ENCODE measurements at regions of chr3 and their contacts with region 1.

Region 1: DNA sequence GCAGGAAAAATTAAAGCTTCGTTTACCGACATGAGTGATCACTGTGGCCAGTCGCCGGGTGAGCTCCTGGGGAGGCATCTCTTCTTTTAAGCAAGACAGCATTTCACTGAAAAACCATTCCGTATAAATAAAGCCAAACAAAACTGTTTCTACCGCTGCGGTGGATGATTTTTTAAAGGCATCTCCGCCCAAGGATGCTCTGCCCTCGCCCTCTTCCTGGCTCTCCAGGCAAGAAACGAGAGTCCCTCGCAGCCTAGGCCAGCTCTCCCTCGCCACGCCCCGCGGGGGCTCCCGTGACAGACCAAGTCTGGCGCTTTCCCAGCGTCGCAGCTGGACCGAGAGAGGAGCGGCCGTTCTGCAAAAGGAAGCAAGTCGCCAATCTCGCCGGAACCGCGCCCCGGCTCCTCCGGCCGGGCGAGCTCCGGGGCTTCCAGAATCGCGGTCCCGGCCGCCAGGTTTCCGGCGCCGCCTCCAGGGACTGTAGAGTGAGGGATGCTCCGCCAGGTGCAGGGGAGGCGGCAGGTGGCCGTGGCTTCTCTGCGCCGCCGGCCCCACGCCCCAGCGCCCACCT is 458 bp downstream of the MCF2L2 start:
- DNase-seq: peak; percentile 57
- ATAC-seq: peak; percentile 21
- H3K4me3 Mint-ChIP-seq: peak overlapping the region; percentile 79
- H3K27ac Mint-ChIP-seq: no peak overlapping the region
- H3K4me1 Mint-ChIP-seq: peaks cover 43% of the 10 kb centered on the region
- H3K27me3 Mint-ChIP-seq: peaks cover 11% of the 10 kb centered on the region

Region 2: DNA sequence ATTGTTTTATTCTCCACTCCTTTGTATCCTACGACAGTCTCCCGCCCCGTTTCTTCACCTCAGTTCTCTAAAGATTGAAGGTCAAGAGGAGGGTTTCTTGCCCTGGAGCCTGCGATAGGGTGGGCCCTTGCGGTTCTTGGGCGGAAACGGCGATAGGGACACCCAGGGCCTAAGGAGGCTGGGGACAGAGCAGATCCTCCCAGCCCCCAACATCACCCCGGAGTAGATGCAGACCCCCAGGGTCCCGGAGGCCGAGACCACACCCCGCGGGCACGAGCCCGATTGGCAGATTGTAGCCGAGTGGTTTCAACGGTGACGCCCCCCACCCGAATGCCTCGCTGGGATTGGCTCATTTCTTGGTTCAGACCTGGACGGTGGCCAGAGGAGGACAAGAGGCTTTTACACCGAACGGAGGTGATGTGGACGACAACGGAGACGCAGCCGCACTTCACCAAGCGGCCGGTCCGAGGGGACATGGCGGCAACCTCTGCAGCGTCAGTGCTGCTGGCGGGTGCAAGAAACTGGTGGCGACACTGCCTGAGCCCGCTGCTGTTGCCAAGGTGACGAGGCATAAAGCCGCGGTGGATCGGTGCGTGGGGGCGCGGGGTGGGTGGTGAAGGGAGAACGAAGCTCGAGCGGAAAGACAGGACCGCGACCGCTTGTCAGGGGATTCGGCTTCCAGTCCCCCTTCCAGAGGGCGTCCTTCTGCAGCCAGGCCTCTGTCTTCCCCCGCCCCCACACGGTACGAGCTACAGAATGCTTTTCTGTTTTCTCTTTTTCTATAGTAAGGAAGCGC is 19.4 kb after region 1 on chr3:
- CTCF ChIA-PET with region 1: interaction called, 5 read pairs
- POLR2A ChIA-PET with region 1: interaction called, 3 read pairs
- intact Hi-C with region 1: loop called (anchors 1 to 2 kb)
- DNase-seq: peak; percentile 88
- ATAC-seq: peak; percentile 93
- H3K4me3 Mint-ChIP-seq: peak overlapping the region; percentile 93
- H3K27ac Mint-ChIP-seq: peak overlapping the region; percentile 73
- H3K4me1 Mint-ChIP-seq: peaks cover 9% of the 10 kb centered on the region
- H3K27me3 Mint-ChIP-seq: no peaks in the 10 kb centered on the region

Region 3: GRCh38 chr3:184261270-184261853 is 833.4 kb after region 1 on chr3 and contains the start of gene CAMK2N2:
- CTCF ChIA-PET with region 1: no interaction called
- POLR2A ChIA-PET with region 1: no interaction called
- intact Hi-C with region 1: loop called in 1 of 2 experiments (anchors 10 kb)
- DNase-seq: peak; percentile 73
- ATAC-seq: peak; percentile 59
- H3K4me3 Mint-ChIP-seq: peak within 1 kb of the TSS; percentile 73
- H3K27ac Mint-ChIP-seq: no peak within 1 kb of the TSS
- H3K4me1 Mint-ChIP-seq: peaks cover 20% of the 10 kb centered on the region
- H3K27me3 Mint-ChIP-seq: peaks cover 31% of the 10 kb centered on the region
- total RNA-seq, gene CAMK2N2: 0.18 to 0.25 TPM

Measured in activated CD4-positive, alpha-beta T cell treated with anti-CD3 and anti-CD28 coated beads for 36 hours (primary cell).